Natural killer cell (primary cell): ENCODE measurements at regions of chr12 and their contacts with region 1.

Region 1: DNA sequence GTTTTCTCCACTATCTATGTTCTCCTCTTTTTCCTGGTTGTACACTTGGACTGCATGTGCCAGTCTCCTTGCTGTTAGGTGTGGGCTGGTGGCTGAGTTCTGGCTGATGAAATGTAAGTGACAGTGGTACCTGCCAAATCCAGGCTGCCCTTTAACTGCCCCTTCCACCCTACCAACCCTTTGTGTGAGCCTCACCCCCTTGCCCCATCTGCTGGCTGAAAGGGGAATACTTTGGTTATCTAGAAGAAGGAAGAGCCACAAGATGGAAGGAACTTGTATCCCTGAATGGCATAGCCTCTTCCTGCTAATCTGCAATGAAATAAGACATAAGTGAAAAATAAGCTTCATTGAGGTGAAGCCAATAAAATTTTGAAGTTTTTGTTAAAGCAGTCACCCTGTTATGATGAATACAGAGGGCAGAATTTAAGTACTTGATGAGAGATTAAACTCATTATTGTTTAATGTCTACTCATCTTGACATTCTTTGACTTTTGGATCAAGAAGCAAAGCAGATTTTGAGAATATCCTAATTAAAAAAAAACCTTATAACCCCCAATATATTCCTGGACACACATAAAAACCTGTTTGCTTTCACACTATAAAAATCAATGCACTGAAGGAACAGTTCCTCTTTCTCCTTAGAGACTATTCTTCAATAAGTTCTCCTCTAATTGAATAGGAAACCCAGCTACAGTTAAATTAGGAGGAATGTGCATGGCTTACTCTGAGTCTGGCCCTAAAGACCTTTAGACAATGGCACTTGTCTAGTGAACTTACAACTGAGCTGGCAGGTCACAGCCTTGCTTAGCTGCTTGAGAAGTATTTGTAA is 262.6 kb upstream of the BTG1 start:
- DNase-seq: peak; percentile 30 to 75
- ATAC-seq: peak; percentile 51 to 65 (median 51)
- H3K4me3 ChIP-seq: no peak overlapping the region
- H3K4me3 Mint-ChIP-seq: no peak overlapping the region
- H3K27ac ChIP-seq: peak overlapping the region; percentile 3
- H3K27ac Mint-ChIP-seq: peak overlapping the region in 1 of 2 donors; percentile 54
- H3K4me1 ChIP-seq: peaks cover 27% of the 10 kb centered on the region
- H3K4me1 Mint-ChIP-seq: peaks cover 44 to 45% of the 10 kb centered on the region in 2 donors
- H3K27me3 ChIP-seq: no peaks in the 10 kb centered on the region
- H3K27me3 Mint-ChIP-seq: no peaks in the 10 kb centered on the region
- CTCF ChIP-seq: peak; percentile 66

Region 2: GRCh38 chr12:91382081-91382543 is 1026.2 kb before region 1 on chr12:
- intact Hi-C with region 1: loop called (anchors 5 kb)
- DNase-seq: peak; percentile 75 to 92
- ATAC-seq: peak; percentile 79 to 88 (median 85)
- H3K4me3 ChIP-seq: no peak overlapping the region
- H3K4me3 Mint-ChIP-seq: no peak overlapping the region
- H3K27ac ChIP-seq: no peak overlapping the region
- H3K27ac Mint-ChIP-seq: peak overlapping the region in 1 of 2 donors; percentile 39
- H3K4me1 ChIP-seq: no peaks in the 10 kb centered on the region
- H3K4me1 Mint-ChIP-seq: peaks cover 9 to 10% of the 10 kb centered on the region in 2 donors
- H3K27me3 ChIP-seq: peaks cover 6% of the 10 kb centered on the region
- H3K27me3 Mint-ChIP-seq: peaks cover 24 to 34% of the 10 kb centered on the region in 2 donors
- CTCF ChIP-seq: peak; percentile 98

Region 3: DNA sequence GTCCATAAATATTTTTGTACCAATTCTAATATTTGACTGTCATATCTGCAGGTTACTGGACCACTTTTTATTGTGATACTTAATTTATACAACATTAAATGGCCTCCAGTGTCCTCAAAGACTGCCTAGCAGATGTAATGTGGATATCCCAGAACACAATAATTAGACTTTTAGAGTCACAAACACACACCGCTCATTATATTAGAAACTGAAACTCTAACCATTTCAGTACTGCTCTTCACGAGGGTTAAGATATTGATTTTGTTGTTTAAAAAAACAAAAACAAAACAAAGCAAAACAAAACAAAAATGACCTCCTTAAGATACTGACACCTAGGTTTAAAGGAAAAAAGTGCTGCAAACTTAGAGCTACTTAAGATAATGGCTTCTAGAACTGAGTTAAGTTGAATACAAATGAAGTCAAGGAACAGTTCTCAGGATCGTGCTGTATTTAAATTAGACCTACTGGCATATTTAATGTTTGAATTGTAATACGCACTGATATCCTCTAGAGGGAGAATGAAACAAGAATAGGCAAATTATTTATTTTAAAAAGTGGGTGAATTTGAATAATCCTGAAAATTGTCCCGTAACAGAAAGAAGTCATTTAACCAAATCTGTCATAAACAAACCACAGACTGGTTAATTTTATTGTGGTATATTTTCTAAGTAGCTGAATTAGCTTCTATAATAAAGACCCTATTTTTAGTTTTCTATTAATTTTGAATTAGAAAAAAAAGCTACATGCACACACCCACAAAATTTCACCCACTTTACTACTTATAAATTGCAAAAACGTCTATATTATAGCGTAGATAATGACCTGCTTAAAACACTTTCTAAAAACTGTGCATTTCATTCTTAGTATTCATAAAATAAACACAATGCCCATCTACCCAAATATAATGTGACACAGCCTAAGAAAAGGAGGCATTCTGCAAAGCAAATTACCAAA is 830.4 kb before region 1 on chr12:
- intact Hi-C with region 1: loop called (anchors 2 kb)
- DNase-seq: peak in 1 of 2 donors; percentile 55
- ATAC-seq: peak; percentile 62 to 79 (median 75)
- H3K4me3 ChIP-seq: no peak overlapping the region
- H3K4me3 Mint-ChIP-seq: peak overlapping the region; percentile 77
- H3K27ac ChIP-seq: no peak overlapping the region
- H3K27ac Mint-ChIP-seq: no peak overlapping the region
- H3K4me1 ChIP-seq: no peaks in the 10 kb centered on the region
- H3K4me1 Mint-ChIP-seq: peaks cover 5 to 9% of the 10 kb centered on the region in 2 donors
- H3K27me3 ChIP-seq: no peaks in the 10 kb centered on the region
- H3K27me3 Mint-ChIP-seq: peaks cover 8 to 29% of the 10 kb centered on the region in 2 donors
- CTCF ChIP-seq: peak; percentile 86

Region 4: DNA sequence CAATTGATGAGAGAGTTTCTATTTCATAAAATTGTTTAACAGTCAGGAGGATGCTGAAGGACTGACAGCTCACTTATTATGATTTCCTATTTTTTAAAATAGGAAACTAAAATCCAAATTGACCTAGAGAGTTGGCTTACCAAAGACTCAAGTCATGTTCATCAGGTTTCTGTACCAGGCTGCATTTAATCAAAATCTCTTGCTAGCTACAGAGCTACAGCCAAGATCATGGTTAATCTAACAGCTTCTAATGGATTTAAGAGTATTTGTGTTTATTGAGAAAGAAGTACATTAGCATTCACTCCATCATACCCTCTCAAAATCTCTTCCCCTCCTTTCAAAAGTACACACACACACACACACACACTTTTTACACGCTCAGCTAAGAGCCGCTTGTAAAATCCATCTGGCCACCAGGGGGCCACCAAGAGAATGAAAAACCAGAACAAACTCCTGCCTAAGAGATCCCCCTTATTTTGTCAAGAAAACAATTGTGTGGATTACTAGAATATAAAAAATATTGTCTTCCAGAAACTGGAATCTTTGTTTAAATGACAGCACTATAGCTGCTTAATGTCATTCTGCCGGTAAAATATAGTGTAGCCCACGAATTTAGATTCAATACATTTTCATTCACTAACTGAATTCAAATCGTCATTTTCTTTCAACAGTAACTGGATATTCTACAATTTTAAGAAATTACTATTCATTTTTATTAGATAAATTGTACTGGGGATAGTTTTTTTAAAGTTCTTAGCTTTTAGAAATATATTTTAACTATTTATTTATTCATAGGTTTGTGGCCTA is 596.6 kb before region 1 on chr12:
- intact Hi-C with region 1: loop called (anchors 10 kb)
- DNase-seq: peak; percentile 67 to 87
- ATAC-seq: peak; percentile 81 to 88 (median 87)
- H3K4me3 ChIP-seq: no peak overlapping the region
- H3K4me3 Mint-ChIP-seq: no peak overlapping the region
- H3K27ac ChIP-seq: no peak overlapping the region
- H3K27ac Mint-ChIP-seq: peak overlapping the region; percentile 76 to 78
- H3K4me1 ChIP-seq: no peaks in the 10 kb centered on the region
- H3K4me1 Mint-ChIP-seq: peaks cover 6 to 10% of the 10 kb centered on the region in 2 donors
- H3K27me3 ChIP-seq: no peaks in the 10 kb centered on the region
- H3K27me3 Mint-ChIP-seq: no peaks in the 10 kb centered on the region
- CTCF ChIP-seq: peak; percentile 95

Region 5: DNA sequence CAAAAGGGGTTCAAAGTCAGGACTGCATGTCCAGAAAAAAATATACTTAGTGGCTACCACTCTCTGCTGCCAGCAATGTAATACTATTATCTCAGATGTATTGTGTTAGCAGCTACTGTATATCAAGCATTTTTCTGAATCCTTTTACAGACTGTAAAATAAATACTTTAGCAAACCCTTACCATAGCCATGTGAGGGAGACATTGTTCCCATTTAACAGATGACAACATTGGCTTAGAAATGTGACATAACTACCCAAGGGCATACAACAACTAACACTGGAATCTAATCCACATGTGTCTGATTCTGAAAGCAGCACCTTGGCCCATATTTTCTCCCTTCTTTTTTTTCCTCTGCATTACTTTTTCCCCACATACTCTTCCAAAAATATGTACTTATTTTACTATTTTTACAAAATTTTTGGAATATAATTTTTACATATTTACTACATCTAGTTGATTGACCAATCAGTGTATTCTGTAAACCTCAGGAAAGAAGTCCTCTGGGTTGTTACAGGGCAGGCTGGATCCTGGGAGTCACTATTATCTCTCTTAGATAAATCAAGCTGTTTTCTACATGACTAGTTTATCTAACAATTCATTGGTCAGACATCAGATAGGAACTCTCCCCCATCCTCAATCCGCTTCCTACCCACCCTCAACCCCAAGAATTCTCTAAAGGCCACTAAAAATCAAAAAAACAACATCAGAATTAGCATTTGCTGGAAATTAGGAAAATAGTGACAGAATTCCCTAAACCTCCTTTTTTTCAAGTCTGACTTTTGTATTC is 416.7 kb before region 1 on chr12:
- intact Hi-C with region 1: loop called (anchors 2 kb)
- DNase-seq: peak in 1 of 2 donors; percentile 74
- ATAC-seq: peak; percentile 69 to 86 (median 78)
- H3K4me3 ChIP-seq: no peak overlapping the region
- H3K4me3 Mint-ChIP-seq: no peak overlapping the region
- H3K27ac ChIP-seq: no peak overlapping the region
- H3K27ac Mint-ChIP-seq: no peak overlapping the region
- H3K4me1 ChIP-seq: no peaks in the 10 kb centered on the region
- H3K4me1 Mint-ChIP-seq: peaks cover 6 to 15% of the 10 kb centered on the region in 2 donors
- H3K27me3 ChIP-seq: no peaks in the 10 kb centered on the region
- H3K27me3 Mint-ChIP-seq: no peaks in the 10 kb centered on the region
- CTCF ChIP-seq: no peak

Region 6: GRCh38 chr12:92034858-92035401 is 373.4 kb before region 1 on chr12:
- intact Hi-C with region 1: loop called (anchors 5 kb)
- DNase-seq: peak; percentile 26 to 79
- ATAC-seq: peak; percentile 56 to 69 (median 58)
- H3K4me3 ChIP-seq: peak overlapping the region; percentile 17
- H3K4me3 Mint-ChIP-seq: peak overlapping the region; percentile 96
- H3K27ac ChIP-seq: peak overlapping the region; percentile 71
- H3K27ac Mint-ChIP-seq: peak overlapping the region; percentile 97 to 98
- H3K4me1 ChIP-seq: peaks cover 36% of the 10 kb centered on the region
- H3K4me1 Mint-ChIP-seq: peaks cover 57 to 72% of the 10 kb centered on the region in 2 donors
- H3K27me3 ChIP-seq: no peaks in the 10 kb centered on the region
- H3K27me3 Mint-ChIP-seq: no peaks in the 10 kb centered on the region
- CTCF ChIP-seq: no peak

Region 7: GRCh38 chr12:92208613-92209121 is 199.6 kb before region 1 on chr12:
- intact Hi-C with region 1: loop called (anchors 5 kb)
- DNase-seq: peak in 1 of 2 donors; percentile 73
- ATAC-seq: peak; percentile 91 to 96 (median 93)
- H3K4me3 ChIP-seq: no peak overlapping the region
- H3K4me3 Mint-ChIP-seq: peak overlapping the region; percentile 69
- H3K27ac ChIP-seq: peak overlapping the region; percentile 45
- H3K27ac Mint-ChIP-seq: peak overlapping the region; percentile 76 to 85
- H3K4me1 ChIP-seq: peaks cover 18% of the 10 kb centered on the region
- H3K4me1 Mint-ChIP-seq: peaks cover 17 to 19% of the 10 kb centered on the region in 2 donors
- H3K27me3 ChIP-seq: no peaks in the 10 kb centered on the region
- H3K27me3 Mint-ChIP-seq: peaks cover 0 to 2% of the 10 kb centered on the region in 2 donors
- CTCF ChIP-seq: no peak